Mammary epithelial cell (primary cell): ENCODE measurements at regions of chr7 and their contacts with region 1.

Region 1: DNA sequence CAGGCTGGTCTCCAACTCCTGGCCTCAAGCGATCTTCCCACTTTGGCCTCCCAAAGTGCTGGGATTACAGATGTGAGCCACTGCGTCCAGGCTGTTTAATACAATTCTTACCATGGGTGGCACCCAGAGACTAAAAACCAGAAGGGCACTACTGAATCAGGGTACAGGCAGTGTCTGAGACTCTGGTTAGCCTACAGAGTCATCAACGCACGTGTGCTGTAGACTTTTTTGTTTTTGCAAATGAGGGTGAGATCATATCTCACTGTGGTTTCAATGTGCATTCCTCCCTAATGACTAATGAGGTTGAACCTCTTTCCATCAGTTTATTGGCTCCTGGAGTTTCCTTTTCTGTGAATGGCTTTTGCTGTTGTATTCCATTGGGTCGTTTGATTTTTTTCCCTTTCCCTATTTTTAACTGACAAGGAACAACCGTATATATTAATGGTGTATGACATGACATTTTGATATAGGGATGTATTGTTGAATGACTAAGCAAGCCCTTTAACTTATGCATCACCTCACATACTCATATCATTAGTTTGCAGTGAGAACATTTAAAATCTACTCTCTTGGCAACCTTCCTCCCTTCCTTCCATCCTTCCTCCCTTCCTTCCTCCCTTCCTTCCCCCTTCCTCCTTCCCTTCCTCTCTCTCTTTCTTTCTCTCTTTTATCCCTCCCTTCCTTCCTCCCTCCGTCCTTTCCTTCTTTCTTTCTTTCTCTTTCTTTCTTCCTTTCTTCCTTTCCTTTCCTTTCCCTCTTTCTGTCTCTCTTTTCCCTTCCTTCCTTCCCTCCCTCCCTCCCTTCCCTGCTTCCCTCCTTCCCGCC is 9.3 kb upstream of the METTL27 start:
- DNase-seq: peak; percentile 100
- H3K4me3 ChIP-seq: no peak overlapping the region
- H3K27ac ChIP-seq: peak overlapping the region; percentile 98
- H3K4me1 ChIP-seq: peaks cover 43% of the 10 kb centered on the region
- H3K27me3 ChIP-seq: no peaks in the 10 kb centered on the region
- CTCF ChIP-seq: no peak

Region 2: DNA sequence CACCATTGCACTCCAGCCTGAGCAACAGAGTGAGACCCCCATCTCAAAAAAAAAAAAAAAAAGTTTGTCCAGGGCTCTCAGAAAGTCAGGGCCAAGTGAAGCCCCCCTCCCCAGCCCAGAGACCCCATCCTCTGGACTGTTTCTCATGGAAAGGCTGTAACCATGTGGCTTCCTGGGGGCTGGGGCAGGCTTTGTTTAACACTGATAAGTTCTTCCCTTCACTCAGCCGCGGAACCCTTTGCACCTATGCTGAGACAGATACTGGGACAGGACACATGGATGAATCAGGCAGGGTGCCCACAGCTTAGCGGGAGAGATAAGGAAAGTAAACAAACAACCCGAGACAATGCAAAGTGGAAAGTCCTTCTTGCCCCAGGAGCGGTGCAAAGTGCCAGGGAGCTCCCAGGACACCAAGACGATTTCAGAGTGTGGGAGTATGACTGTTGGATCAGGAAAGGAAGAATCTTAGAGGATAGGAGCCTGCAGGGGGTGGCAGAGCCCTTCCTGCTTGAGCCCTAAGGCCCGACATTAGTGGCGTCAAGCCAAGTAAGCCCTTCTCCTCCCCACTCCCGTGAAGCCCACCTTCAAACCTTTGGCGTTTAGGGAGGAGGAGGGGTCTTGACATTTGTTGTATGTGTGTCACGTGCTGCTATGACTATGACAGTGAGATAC is 238.9 kb before region 1 on chr7:
- CTCF ChIA-PET with region 1: no interaction called
- dilution Hi-C with region 1: no loop called
- in situ Hi-C with region 1: no loop called
- intact Hi-C with region 1: loop called (anchors 2 kb)
- DNase-seq: peak; percentile 58
- H3K4me3 ChIP-seq: no peak overlapping the region
- H3K27ac ChIP-seq: no peak overlapping the region
- H3K4me1 ChIP-seq: peaks cover 5% of the 10 kb centered on the region
- H3K27me3 ChIP-seq: no peaks in the 10 kb centered on the region
- CTCF ChIP-seq: peak in 1 of 2 donors; percentile 41

Region 3: DNA sequence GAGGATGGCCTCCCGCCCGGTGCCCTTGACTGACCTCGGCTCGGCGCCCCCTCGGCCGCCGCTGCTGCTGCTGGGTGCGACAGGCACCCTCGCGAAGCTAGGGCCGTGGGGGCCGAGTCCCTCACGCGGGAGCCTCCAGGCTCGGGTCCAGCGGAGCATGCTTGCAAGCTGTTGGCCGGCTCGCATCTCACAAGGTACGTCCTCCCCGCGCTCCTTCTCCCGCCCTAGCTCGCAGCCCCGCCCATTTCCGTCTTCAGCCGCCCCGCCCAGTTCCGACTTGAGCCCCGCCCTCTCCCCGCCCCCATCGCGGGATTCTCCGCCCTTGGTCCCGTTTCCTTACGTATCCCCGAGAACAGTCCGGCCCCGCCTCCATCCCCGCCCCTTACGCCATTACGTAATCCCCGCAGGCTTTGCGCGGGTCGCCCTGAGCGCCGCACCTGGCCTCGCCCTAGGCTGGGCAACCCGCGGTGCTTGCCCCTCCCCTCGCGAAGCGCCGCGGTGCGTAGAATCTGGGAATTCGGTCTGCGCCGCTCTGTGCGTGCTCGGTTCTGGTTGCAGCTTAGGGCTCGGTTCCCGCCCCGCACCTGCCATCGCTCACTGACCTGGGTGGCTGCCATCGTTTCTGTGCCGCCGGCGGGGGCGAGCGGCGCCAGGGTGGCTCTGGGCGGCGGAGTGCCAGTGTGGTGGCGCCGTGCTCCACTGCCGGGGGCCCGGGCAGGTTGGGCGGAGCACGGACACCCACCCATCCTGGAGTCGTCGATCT is 112.8 kb before region 1 on chr7 and contains the start of gene ABHD11:
- CTCF ChIA-PET with region 1: interaction called, 4 read pairs
- dilution Hi-C with region 1: no loop called
- in situ Hi-C with region 1: loop called in 1 of 2 experiments (anchors 5 kb)
- intact Hi-C with region 1: loop called (anchors 1 kb)
- DNase-seq: peak; percentile 96
- H3K4me3 ChIP-seq: peak within 1 kb of the TSS; percentile 59 to 84 (median 73)
- H3K27ac ChIP-seq: peak within 1 kb of the TSS; percentile 82
- H3K4me1 ChIP-seq: peaks cover 9% of the 10 kb centered on the region
- H3K27me3 ChIP-seq: no peaks in the 10 kb centered on the region
- CTCF ChIP-seq: no peak
- total RNA-seq, gene ABHD11: 6.7 to 23.6 TPM

Region 4: GRCh38 chr7:73822319-73823076 is 29.1 kb before region 1 on chr7:
- CTCF ChIA-PET with region 1: no interaction called
- dilution Hi-C with region 1: loop called (anchors 5 kb)
- in situ Hi-C with region 1: no loop called
- intact Hi-C with region 1: loop called (anchors 1 kb)
- DNase-seq: peak; percentile 100
- H3K4me3 ChIP-seq: no peak overlapping the region
- H3K27ac ChIP-seq: peak overlapping the region; percentile 90
- H3K4me1 ChIP-seq: peaks cover 19% of the 10 kb centered on the region
- H3K27me3 ChIP-seq: no peaks in the 10 kb centered on the region
- CTCF ChIP-seq: no peak

Region 5: GRCh38 chr7:74173866-74174605 is 322.4 kb after region 1 on chr7 and contains the start of gene EIF4H:
- CTCF ChIA-PET with region 1: no interaction called
- dilution Hi-C with region 1: no loop called
- in situ Hi-C with region 1: loop called in 1 of 2 experiments (anchors 25 kb)
- intact Hi-C with region 1: no loop called
- DNase-seq: peak; percentile 94
- H3K4me3 ChIP-seq: peak within 1 kb of the TSS; percentile 83 to 98 (median 87)
- H3K27ac ChIP-seq: peak within 1 kb of the TSS; percentile 86
- H3K4me1 ChIP-seq: peaks cover 33% of the 10 kb centered on the region
- H3K27me3 ChIP-seq: no peaks in the 10 kb centered on the region
- CTCF ChIP-seq: no peak
- total RNA-seq, gene EIF4H: 252 to 365 TPM